Activated CD4-positive, alpha-beta T cell treated with anti-CD3 and anti-CD28 coated beads for 36 hours (primary cell): ENCODE measurements at regions of chr13 and their contacts with region 1.

Region 1: DNA sequence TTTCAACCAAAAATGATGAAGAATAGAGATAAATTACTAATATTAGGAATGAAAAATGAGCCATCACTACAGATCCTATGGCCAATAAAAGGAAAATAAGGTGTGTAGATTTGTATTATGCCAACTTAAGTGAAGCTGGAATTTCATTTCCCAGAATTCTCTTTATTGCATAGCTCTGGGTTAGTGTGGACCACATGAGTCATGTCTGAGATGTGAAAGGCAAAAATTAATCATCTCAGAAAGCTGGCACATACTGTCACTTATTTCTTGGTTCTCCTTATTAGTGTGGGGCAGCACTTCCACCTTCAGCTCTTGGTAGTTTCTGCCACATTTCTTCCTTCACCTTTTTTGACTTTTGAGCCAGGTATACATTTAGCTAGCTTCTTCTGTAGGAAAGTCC is 82.6 kb downstream of the KATNAL1 start:
- DNase-seq: peak; percentile 22
- ATAC-seq: peak; percentile 96
- H3K4me3 Mint-ChIP-seq: no peak overlapping the region
- H3K27ac Mint-ChIP-seq: peak overlapping the region; percentile 10
- H3K4me1 Mint-ChIP-seq: peaks cover 10% of the 10 kb centered on the region
- H3K27me3 Mint-ChIP-seq: no peaks in the 10 kb centered on the region

Region 2: GRCh38 chr13:29948244-29948643 is 276.5 kb before region 1 on chr13:
- CTCF ChIA-PET with region 1: no interaction called
- POLR2A ChIA-PET with region 1: no interaction called
- intact Hi-C with region 1: no loop called
- DNase-seq: no peak
- ATAC-seq: no peak
- H3K4me3 Mint-ChIP-seq: no peak overlapping the region
- H3K27ac Mint-ChIP-seq: no peak overlapping the region
- H3K4me1 Mint-ChIP-seq: peaks cover 5% of the 10 kb centered on the region
- H3K27me3 Mint-ChIP-seq: no peaks in the 10 kb centered on the region

Region 3: GRCh38 chr13:30142486-30143211 is 82.1 kb before region 1 on chr13:
- CTCF ChIA-PET with region 1: no interaction called
- POLR2A ChIA-PET with region 1: no interaction called
- intact Hi-C with region 1: loop called (anchors 2 to 10 kb)
- DNase-seq: peak; percentile 66
- ATAC-seq: peak; percentile 49
- H3K4me3 Mint-ChIP-seq: no peak overlapping the region
- H3K27ac Mint-ChIP-seq: peak overlapping the region; percentile 84
- H3K4me1 Mint-ChIP-seq: peaks cover 62% of the 10 kb centered on the region
- H3K27me3 Mint-ChIP-seq: no peaks in the 10 kb centered on the region

Region 4: GRCh38 chr13:30204564-30204963 is 20.2 kb before region 1 on chr13:
- CTCF ChIA-PET with region 1: interaction called, 4 read pairs
- POLR2A ChIA-PET with region 1: no interaction called
- intact Hi-C with region 1: loop called in 1 of 2 experiments (anchors 1 kb)
- DNase-seq: peak; percentile 22
- ATAC-seq: peak; percentile 89
- H3K4me3 Mint-ChIP-seq: no peak overlapping the region
- H3K27ac Mint-ChIP-seq: no peak overlapping the region
- H3K4me1 Mint-ChIP-seq: peaks cover 12% of the 10 kb centered on the region
- H3K27me3 Mint-ChIP-seq: no peaks in the 10 kb centered on the region

Region 5: GRCh38 chr13:30253830-30254229 is 29.1 kb after region 1 on chr13:
- CTCF ChIA-PET with region 1: interaction called, 3 read pairs
- POLR2A ChIA-PET with region 1: no interaction called
- intact Hi-C with region 1: loop called in 1 of 2 experiments (anchors 1 kb)
- DNase-seq: no peak
- ATAC-seq: peak; percentile 53
- H3K4me3 Mint-ChIP-seq: no peak overlapping the region
- H3K27ac Mint-ChIP-seq: peak overlapping the region; percentile 14
- H3K4me1 Mint-ChIP-seq: peaks cover 22% of the 10 kb centered on the region
- H3K27me3 Mint-ChIP-seq: no peaks in the 10 kb centered on the region